Heart right ventricle (tissue), 16 donors: ENCODE measurements at regions of chr4 and their contacts with region 1.

Region 1: DNA sequence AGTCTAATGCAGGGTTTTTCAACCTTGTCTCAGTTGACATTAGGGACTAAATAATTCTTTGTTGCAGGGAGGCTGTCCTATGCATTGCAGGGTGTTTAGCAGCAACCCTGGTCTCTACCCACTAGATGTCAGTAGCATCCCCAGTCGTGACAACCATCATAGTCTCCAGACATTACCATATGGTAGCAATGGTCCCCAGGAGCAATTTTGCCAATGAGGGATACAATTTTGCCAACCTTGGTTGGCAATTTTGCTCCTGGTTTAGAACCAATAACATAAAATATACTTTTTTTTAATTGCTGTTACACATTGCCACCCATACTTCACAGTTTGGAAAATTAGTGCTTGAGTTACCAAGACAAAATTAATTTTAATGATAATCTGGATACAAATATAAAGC is 6.0 kb downstream of the EREG start:
- DNase-seq: no peak
- ATAC-seq: peak in 3 of 8 donors; percentile 54 to 77 (median 66)
- H3K4me3 ChIP-seq: no peak overlapping the region
- H3K27ac ChIP-seq: no peak overlapping the region
- H3K4me1 ChIP-seq: peaks cover 0 to 3% (median under 1%) of the 10 kb centered on the region in 9 donors
- H3K27me3 ChIP-seq: peaks cover 0 to 36% (median 11%) of the 10 kb centered on the region in 7 donors
- CTCF ChIP-seq: peak in 8 of 9 donors; percentile 16 to 66 (median 58)

Region 2: GRCh38 chr4:74353858-74354257 is 17.1 kb before region 1 on chr4:
- intact Hi-C with region 1: no loop called
- DNase-seq: no peak
- ATAC-seq: no peak
- H3K4me3 ChIP-seq: no peak overlapping the region
- H3K27ac ChIP-seq: no peak overlapping the region
- H3K4me1 ChIP-seq: no peaks in the 10 kb centered on the region
- H3K27me3 ChIP-seq: no peaks in the 10 kb centered on the region
- CTCF ChIP-seq: no peak

Region 3: GRCh38 chr4:74418063-74418670 is 47.3 kb after region 1 on chr4:
- intact Hi-C with region 1: loop called in 1 of 10 experiments (anchors 2 kb)
- DNase-seq: peak in 1 of 2 donors; percentile 21
- ATAC-seq: peak in 4 of 8 donors; percentile 33 to 48 (median 40)
- H3K4me3 ChIP-seq: no peak overlapping the region
- H3K27ac ChIP-seq: no peak overlapping the region
- H3K4me1 ChIP-seq: peaks cover 0 to 10% (median 8%) of the 10 kb centered on the region in 9 donors
- H3K27me3 ChIP-seq: no peaks in the 10 kb centered on the region
- CTCF ChIP-seq: no peak

Region 4: GRCh38 chr4:74444891-74445642 is 74.2 kb after region 1 on chr4 and contains the start of gene AREG:
- intact Hi-C with region 1: loop called in 3 of 10 experiments (anchors 5 to 10 kb)
- DNase-seq: peak; percentile 59 to 62
- ATAC-seq: peak; percentile 70 to 93 (median 90)
- H3K4me3 ChIP-seq: peak within 1 kb of the TSS; percentile 16 to 75 (median 64)
- H3K27ac ChIP-seq: peak within 1 kb of the TSS in 8 of 10 donors; percentile 16 to 87 (median 48)
- H3K4me1 ChIP-seq: peaks cover 0 to 14% (median 8%) of the 10 kb centered on the region in 9 donors
- H3K27me3 ChIP-seq: no peaks in the 10 kb centered on the region
- CTCF ChIP-seq: peak in 8 of 9 donors; percentile 5 to 66 (median 59)
- total RNA-seq, gene AREG: 0.77 to 17.7 (median 4.3) TPM in 8 of 10 donors, not detected in the others

Region 5: DNA sequence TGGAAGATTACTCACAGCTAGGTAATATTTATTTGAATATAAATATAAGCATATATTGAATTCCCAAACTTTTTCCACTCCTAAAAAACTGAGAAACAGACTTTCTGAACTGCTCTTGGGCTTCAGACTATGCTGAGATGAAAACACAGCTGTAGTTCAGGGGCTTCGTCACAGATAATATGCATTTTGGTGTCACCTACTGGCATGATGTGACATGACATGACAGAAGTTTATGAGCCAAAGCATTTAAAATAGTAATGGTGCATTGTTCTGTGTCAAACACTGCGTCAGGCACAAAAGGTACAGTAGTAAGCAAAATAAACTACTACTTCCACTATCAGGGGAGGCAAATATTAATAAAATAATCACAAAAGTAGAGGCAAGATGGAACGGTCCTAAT is 252.1 kb after region 1 on chr4:
- intact Hi-C with region 1: loop called in 7 of 10 experiments (anchors 5 to 10 kb)
- DNase-seq: no peak
- ATAC-seq: peak in 2 of 8 donors; percentile 65 to 69
- H3K4me3 ChIP-seq: no peak overlapping the region
- H3K27ac ChIP-seq: no peak overlapping the region
- H3K4me1 ChIP-seq: peaks cover 0 to 30% (median 5%) of the 10 kb centered on the region in 9 donors
- H3K27me3 ChIP-seq: no peaks in the 10 kb centered on the region
- CTCF ChIP-seq: peak; percentile 10 to 58 (median 43)